ENCODE measurements at regions of chr17 and their contacts with region 1.

Region 1: GRCh38 chr17:50889528-50890118 is 23.5 kb upstream of the TOB1 start:
- DNase-seq: no peak
- H3K4me3 ChIP-seq: no peak overlapping the region
- H3K27ac ChIP-seq: no peak overlapping the region
- H3K4me1 ChIP-seq: peaks cover 0 to 14% (median 9%) of the 10 kb centered on the region in 4 donors
- H3K27me3 ChIP-seq: no peaks in the 10 kb centered on the region
- CTCF ChIP-seq: no peak
- EP300 ChIP-seq: no peak
- POLR2A ChIP-seq: no peak

Region 2: DNA sequence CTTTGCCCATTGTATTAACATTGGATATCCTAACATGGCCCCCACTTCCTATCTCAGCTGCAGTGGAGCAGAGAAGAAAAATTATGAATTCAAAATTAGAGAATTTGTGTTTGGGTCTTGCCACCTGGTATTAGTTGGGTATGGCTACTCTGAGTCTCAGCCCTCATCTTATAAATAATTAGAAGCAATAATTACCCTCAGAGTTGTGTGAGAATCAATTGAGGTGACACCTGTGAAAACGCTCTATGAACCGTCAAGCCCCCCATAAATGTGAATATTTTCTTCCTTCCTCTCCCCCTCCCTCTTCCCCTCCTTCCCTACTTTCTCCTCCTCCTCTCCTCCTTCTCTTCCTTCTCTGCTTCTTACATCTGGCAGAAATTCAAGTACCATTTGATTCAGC is 14.5 kb before region 1 on chr17:
- intact Hi-C with region 1: loop called (anchors 2 kb)
- DNase-seq: no peak
- H3K4me3 ChIP-seq: no peak overlapping the region
- H3K27ac ChIP-seq: no peak overlapping the region
- H3K4me1 ChIP-seq: peaks cover 0 to 16% (median 9%) of the 10 kb centered on the region in 4 donors
- H3K27me3 ChIP-seq: no peaks in the 10 kb centered on the region
- CTCF ChIP-seq: no peak
- EP300 ChIP-seq: no peak
- POLR2A ChIP-seq: no peak